ENCODE measurements at regions of chr6 and their contacts with region 1.

Region 1: GRCh38 chr6:88963139-88964090 is at the start of gene RNGTT:
- DNase-seq: peak; percentile 96 to 98 (median 97)
- ATAC-seq: peak; percentile 99
- H3K4me3 ChIP-seq: peak within 1 kb of the TSS; percentile 99
- H3K27ac ChIP-seq: peak within 1 kb of the TSS; percentile 89
- H3K4me1 ChIP-seq: peaks cover 4 to 9% of the 10 kb centered on the region in 2 experiments; a peak in 4 of 5 replicates
- H3K27me3 ChIP-seq: no peaks in the 10 kb centered on the region
- CTCF ChIP-seq: 0 out of 6 replicates have a peak, but pooled peaks of 1 of the 3 experiments have one; percentile 5
- EP300 ChIP-seq: no peak
- POLR2A ChIP-seq: peak; percentile 91
- RAD21 ChIP-seq: no peak
- polyA plus RNA-seq, gene RNGTT: 6.1 to 7.8 TPM

Region 2: GRCh38 chr6:88368071-88368787 is 595.2 kb before region 1 on chr6:
- CTCF ChIA-PET with region 1: no interaction called
- POLR2A ChIA-PET with region 1: no interaction called
- in situ Hi-C with region 1: no loop called
- intact Hi-C with region 1: no loop called
- DNase-seq: no peak
- ATAC-seq: no peak
- H3K4me3 ChIP-seq: no peak overlapping the region
- H3K27ac ChIP-seq: no peak overlapping the region
- H3K4me1 ChIP-seq: peaks cover 0 to 19% of the 10 kb centered on the region in 2 experiments; a peak in 2 of 5 replicates
- H3K27me3 ChIP-seq: no peaks in the 10 kb centered on the region
- CTCF ChIP-seq: no peak
- EP300 ChIP-seq: no peak
- POLR2A ChIP-seq: no peak
- RAD21 ChIP-seq: no peak

Region 3: DNA sequence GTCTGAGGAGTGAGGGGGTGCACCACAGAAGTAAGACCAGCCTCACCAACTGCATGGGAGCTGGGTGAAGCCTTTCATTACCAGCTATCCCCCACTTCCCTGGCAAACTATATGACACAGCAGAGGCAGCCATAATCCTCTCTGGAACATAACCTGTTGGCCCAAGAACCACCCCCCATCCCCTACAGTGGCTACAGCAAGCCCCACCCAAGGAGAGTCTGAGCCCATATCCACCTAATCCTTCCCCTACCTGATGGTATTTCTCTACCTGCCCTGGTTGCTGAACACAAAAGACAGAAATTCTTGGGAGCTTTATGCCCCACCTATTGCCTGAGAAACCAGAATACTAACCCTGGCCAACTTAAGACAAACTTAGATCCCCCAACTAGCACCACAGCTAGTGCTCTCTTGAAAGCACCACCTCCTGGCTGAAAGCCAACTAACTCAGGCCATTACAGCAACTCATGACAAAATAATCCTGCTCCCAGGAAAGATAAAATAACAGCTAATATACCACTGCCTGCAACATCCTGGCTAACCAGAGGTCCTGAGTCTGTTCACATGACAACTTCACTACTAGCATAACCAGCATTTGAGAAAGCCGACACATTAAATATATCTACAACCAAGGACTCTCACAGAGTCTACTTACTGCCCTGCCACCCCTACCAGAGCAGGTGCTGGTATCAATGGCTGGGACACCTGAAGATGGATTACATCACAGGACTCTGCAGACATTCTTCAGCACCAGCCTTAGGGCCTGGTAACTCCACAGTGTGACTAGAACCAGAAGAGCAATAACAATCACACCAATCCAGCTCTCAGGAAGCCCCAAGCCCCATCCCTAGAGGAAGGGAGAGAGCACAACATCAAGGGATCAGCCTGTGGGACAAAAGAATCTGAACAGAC is 11.1 kb before region 1 on chr6:
- CTCF ChIA-PET with region 1: no interaction called
- POLR2A ChIA-PET with region 1: interaction called, 10 read pairs
- in situ Hi-C with region 1: no loop called
- intact Hi-C with region 1: no loop called
- DNase-seq: peak in 1 of 4 experiments; percentile 70
- ATAC-seq: peak; percentile 79
- H3K4me3 ChIP-seq: no peak overlapping the region
- H3K27ac ChIP-seq: no peak overlapping the region
- H3K4me1 ChIP-seq: peaks cover 0 to 3% of the 10 kb centered on the region in 2 experiments; a peak in 2 of 5 replicates
- H3K27me3 ChIP-seq: no peaks in the 10 kb centered on the region
- CTCF ChIP-seq: no peak
- EP300 ChIP-seq: no peak
- POLR2A ChIP-seq: no peak
- RAD21 ChIP-seq: no peak

Measured in K562 (cell line).